Posterior vena cava (tissue), 2 donors: ENCODE measurements at regions of chr2 and their contacts with region 1.

Region 1: GRCh38 chr2:30095402-30095801 is 51.4 kb upstream of the YPEL5 start:
- DNase-seq: no peak

Region 2: GRCh38 chr2:30026087-30027055 is 69.0 kb before region 1 on chr2:
- intact Hi-C with region 1: no loop called
- DNase-seq: peak; percentile 75

Region 3: DNA sequence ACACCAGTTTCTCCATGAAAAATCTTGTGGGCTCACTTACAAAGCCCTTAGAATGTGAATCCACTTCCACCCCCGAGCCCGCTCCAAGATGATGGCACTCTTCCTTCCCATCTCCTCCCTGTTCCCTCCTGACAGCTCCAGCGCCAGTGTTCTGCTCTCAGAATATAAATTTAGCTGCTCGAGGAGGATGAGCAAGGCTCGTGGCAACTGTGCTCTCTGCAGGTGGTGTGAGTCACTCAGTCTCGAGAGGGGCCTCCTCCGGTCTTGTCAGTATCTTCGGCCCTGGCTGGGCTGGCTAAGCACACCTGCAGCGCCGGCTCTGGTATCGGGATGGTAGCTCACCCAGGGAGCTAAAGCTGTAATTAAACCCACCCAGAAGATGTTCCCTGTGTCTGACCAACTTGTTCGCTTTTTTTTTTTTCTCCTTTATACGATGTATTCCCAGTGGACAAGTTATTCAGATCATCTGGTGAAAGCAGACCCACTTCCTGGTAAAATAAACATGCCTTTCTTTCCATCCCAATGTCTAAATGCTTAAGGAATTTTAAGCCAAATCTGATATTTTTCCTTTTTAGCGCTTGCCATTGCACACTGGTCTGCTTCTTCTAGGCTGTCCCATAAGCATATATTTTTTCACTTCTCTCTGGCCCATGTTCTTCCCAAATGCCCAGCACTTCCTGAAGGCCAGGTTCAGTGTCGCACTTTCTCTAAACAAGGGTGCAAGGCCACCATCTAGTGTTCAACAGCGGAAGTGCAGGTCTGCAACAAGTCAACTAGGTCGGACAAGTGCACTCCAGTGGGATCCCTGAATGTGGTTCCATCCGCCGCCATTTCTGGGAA is 20.0 kb after region 1 on chr2:
- intact Hi-C with region 1: loop called in 1 of 2 experiments (anchors 1 kb)
- DNase-seq: peak; percentile 89